ENCODE measurements at regions of chr10 and their contacts with region 1.

Region 1: GRCh38 chr10:17144757-17145156 is 15.1 kb upstream of the CUBN start:
- DNase-seq: peak; percentile 77
- H3K4me3 Mint-ChIP-seq: no peak overlapping the region
- H3K27ac Mint-ChIP-seq: peak overlapping the region; percentile 34
- H3K4me1 Mint-ChIP-seq: peaks cover 20% of the 10 kb centered on the region
- H3K27me3 Mint-ChIP-seq: no peaks in the 10 kb centered on the region

Region 2: GRCh38 chr10:16891375-16892313 is 253.1 kb before region 1 on chr10:
- CTCF ChIA-PET with region 1: no interaction called
- POLR2A ChIA-PET with region 1: no interaction called
- intact Hi-C with region 1: loop called (anchors 5 kb)
- DNase-seq: peak; percentile 69
- H3K4me3 Mint-ChIP-seq: peak overlapping the region; percentile 65
- H3K27ac Mint-ChIP-seq: peak overlapping the region; percentile 63
- H3K4me1 Mint-ChIP-seq: peaks cover 11% of the 10 kb centered on the region
- H3K27me3 Mint-ChIP-seq: no peaks in the 10 kb centered on the region

Region 3: GRCh38 chr10:17001961-17002749 is 142.6 kb before region 1 on chr10:
- CTCF ChIA-PET with region 1: no interaction called
- POLR2A ChIA-PET with region 1: no interaction called
- intact Hi-C with region 1: loop called (anchors 1 kb)
- DNase-seq: peak; percentile 43
- H3K4me3 Mint-ChIP-seq: no peak overlapping the region
- H3K27ac Mint-ChIP-seq: peak overlapping the region; percentile 63
- H3K4me1 Mint-ChIP-seq: peaks cover 43% of the 10 kb centered on the region
- H3K27me3 Mint-ChIP-seq: peaks cover 13% of the 10 kb centered on the region

Region 4: GRCh38 chr10:17029581-17030271 is 115.0 kb before region 1 on chr10:
- CTCF ChIA-PET with region 1: no interaction called
- POLR2A ChIA-PET with region 1: interaction called, 6 read pairs
- intact Hi-C with region 1: loop called (anchors 1 kb)
- DNase-seq: peak; percentile 93
- H3K4me3 Mint-ChIP-seq: peak overlapping the region; percentile 69
- H3K27ac Mint-ChIP-seq: peak overlapping the region; percentile 85
- H3K4me1 Mint-ChIP-seq: peaks cover 69% of the 10 kb centered on the region
- H3K27me3 Mint-ChIP-seq: no peaks in the 10 kb centered on the region

Region 5: GRCh38 chr10:17067376-17068264 is 77.1 kb before region 1 on chr10:
- CTCF ChIA-PET with region 1: no interaction called
- POLR2A ChIA-PET with region 1: no interaction called
- intact Hi-C with region 1: loop called (anchors 5 kb)
- DNase-seq: no peak
- H3K4me3 Mint-ChIP-seq: no peak overlapping the region
- H3K27ac Mint-ChIP-seq: no peak overlapping the region
- H3K4me1 Mint-ChIP-seq: peaks cover 21% of the 10 kb centered on the region
- H3K27me3 Mint-ChIP-seq: no peaks in the 10 kb centered on the region

Region 6: DNA sequence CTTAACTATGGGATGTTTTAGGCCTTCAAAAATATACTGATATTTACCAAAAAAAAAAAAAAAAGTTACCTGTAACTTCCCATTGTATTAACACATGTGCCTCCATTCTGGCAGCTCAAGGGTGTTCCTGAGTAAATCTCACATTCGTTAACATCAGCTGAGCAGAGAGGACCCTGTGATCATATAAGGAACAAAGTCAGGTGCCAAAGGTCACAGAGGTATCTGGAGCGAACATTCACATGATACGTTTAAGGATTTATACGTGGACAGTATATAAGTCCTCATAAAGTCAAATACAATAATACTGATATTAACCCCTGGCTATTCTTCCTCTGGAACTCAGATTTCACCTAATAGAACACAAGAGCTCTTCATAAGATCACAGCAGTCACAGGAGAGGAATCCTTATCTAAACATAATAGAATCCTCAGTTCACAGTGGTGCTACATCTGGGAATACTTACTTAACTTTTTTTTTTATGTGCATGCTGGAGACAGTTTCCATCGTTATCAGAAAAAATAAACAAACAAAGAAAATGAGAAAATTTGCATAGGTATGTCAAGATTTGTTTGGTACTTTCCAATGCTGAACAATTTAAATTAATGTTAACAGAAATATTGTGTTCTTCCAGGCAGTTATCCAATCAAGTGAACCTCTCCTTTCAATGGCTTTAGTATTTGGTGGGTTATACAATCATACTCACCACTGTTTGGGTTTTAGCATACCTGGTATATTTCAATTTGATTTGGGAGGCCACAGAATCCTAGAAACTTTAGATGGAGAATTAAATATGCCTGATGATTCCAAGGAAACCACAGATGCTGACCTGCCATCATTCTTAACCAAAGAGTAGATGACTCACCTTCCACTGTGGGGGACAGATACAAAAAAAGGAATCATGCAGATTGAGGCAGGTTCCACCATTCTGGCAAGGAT is 21.8 kb before region 1 on chr10:
- CTCF ChIA-PET with region 1: no interaction called
- POLR2A ChIA-PET with region 1: no interaction called
- intact Hi-C with region 1: no loop called
- DNase-seq: no peak
- H3K4me3 Mint-ChIP-seq: no peak overlapping the region
- H3K27ac Mint-ChIP-seq: no peak overlapping the region
- H3K4me1 Mint-ChIP-seq: no peaks in the 10 kb centered on the region
- H3K27me3 Mint-ChIP-seq: no peaks in the 10 kb centered on the region

Region 7: GRCh38 chr10:17200912-17201793 is 56.4 kb after region 1 on chr10 and contains the start of gene TRDMT1:
- CTCF ChIA-PET with region 1: no interaction called
- POLR2A ChIA-PET with region 1: no interaction called
- intact Hi-C with region 1: loop called (anchors 2 kb)
- DNase-seq: peak; percentile 82
- H3K4me3 Mint-ChIP-seq: peak within 1 kb of the TSS; percentile 94
- H3K27ac Mint-ChIP-seq: peak within 1 kb of the TSS; percentile 91
- H3K4me1 Mint-ChIP-seq: peaks cover 46% of the 10 kb centered on the region
- H3K27me3 Mint-ChIP-seq: no peaks in the 10 kb centered on the region
- total RNA-seq, gene TRDMT1: 5.0 to 5.8 TPM

Measured in activated CD4-positive, alpha-beta memory T cell treated with anti-CD3 and anti-CD28 coated beads for 36 hours (primary cell).